Body of pancreas (tissue), 4 donors: ENCODE measurements at regions of chr9 and their contacts with region 1.

Region 1: GRCh38 chr9:101119206-101119819 is 90.8 kb downstream of the PLPPR1 start:
- DNase-seq: peak; percentile 68 to 79 (median 70)
- ATAC-seq: peak; percentile 82
- H3K4me3 ChIP-seq: no peak overlapping the region
- H3K27ac ChIP-seq: no peak overlapping the region
- H3K4me1 ChIP-seq: no peaks in the 10 kb centered on the region
- H3K27me3 ChIP-seq: no peaks in the 10 kb centered on the region
- CTCF ChIP-seq: peak; percentile 70 to 84 (median 81)
- POLR2A ChIP-seq: no peak

Region 2: DNA sequence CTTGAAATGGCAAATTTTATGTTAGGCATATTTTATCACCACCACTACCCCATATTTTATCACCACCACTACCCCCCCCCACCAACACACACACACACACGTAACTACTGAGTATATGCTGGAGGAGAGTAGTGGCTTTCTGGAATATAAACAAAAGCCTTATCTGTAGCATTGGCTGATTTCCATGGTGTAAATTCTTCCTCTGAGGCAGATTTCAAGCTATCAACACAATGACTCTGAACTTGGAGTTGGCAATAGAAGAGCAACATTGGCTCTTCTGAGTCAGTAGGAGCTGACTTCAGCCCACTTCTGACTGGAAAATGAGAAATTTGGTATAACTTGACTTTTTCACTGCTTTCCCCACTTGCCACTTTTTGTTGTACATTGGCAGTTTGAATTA is 398.4 kb before region 1 on chr9:
- intact Hi-C with region 1: loop called (anchors 10 kb)
- DNase-seq: no peak
- ATAC-seq: no peak
- H3K4me3 ChIP-seq: no peak overlapping the region
- H3K27ac ChIP-seq: no peak overlapping the region
- H3K4me1 ChIP-seq: no peaks in the 10 kb centered on the region
- H3K27me3 ChIP-seq: no peaks in the 10 kb centered on the region
- CTCF ChIP-seq: no peak
- POLR2A ChIP-seq: no peak